Activated CD4-positive, alpha-beta memory T cell treated with anti-CD3 and anti-CD28 coated beads for 36 hours (primary cell): ENCODE measurements at regions of chr11 and their contacts with region 1.

Region 1: GRCh38 chr11:61639816-61640443 is 40.3 kb upstream of the DAGLA start:
- DNase-seq: no peak
- H3K4me3 Mint-ChIP-seq: no peak overlapping the region
- H3K27ac Mint-ChIP-seq: no peak overlapping the region
- H3K4me1 Mint-ChIP-seq: no peaks in the 10 kb centered on the region
- H3K27me3 Mint-ChIP-seq: peaks cover 3% of the 10 kb centered on the region

Region 2: DNA sequence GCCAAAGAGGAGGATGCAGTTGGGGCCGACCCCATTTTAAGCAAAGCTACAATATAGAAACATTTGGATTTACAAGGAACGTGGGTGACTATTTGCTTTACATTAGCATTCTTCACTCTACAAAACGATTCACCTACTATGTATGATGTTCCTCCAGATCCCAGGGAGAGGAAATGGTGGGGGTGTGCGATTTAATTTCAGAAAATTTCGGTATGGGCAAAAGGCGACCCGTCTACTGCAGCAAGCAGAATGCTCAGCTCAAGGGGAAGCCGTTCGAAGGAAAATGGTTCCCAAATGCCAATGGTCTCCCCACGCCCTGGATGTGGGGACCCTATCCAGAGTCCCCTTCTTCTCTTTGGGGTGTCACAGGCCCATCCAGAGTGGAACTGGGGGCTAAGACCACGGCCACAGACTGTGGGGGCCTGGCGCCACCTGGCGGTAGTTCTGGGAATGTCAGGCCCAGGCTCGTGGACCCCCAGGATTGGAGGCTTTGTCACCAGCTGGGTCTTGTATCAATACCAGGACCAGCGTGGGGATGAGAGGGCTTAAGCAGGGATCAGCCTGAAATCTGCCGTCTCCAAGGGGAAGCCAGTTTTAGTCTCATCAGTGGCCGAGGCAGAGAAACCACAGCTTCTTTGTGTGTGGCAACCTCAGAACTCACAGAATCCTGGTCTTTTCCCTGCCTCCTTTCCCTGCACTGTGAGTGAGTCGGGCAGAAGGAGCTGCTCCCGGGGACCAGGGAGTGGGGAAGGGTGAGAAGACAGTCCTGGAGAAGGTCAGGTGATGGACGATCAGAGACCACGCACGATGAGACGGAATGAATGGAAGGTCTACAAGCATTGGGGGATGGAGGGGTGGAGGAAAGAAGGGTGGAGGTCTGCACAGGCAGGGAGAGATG is 123.0 kb before region 1 on chr11:
- CTCF ChIA-PET with region 1: interaction called, 10 read pairs
- POLR2A ChIA-PET with region 1: no interaction called
- intact Hi-C with region 1: no loop called
- DNase-seq: peak; percentile 60
- H3K4me3 Mint-ChIP-seq: peak overlapping the region; percentile 24
- H3K27ac Mint-ChIP-seq: no peak overlapping the region
- H3K4me1 Mint-ChIP-seq: peaks cover 7% of the 10 kb centered on the region
- H3K27me3 Mint-ChIP-seq: peaks cover 18% of the 10 kb centered on the region

Region 3: GRCh38 chr11:61587521-61588453 is 52.1 kb before region 1 on chr11:
- CTCF ChIA-PET with region 1: interaction called, 13 read pairs
- POLR2A ChIA-PET with region 1: no interaction called
- intact Hi-C with region 1: no loop called
- DNase-seq: peak; percentile 73
- H3K4me3 Mint-ChIP-seq: peak overlapping the region; percentile 59
- H3K27ac Mint-ChIP-seq: no peak overlapping the region
- H3K4me1 Mint-ChIP-seq: peaks cover 12% of the 10 kb centered on the region
- H3K27me3 Mint-ChIP-seq: peaks cover 16% of the 10 kb centered on the region

Region 4: GRCh38 chr11:61650781-61651571 is 11.0 kb after region 1 on chr11:
- CTCF ChIA-PET with region 1: interaction called, 17 read pairs
- POLR2A ChIA-PET with region 1: no interaction called
- intact Hi-C with region 1: no loop called
- DNase-seq: no peak
- H3K4me3 Mint-ChIP-seq: no peak overlapping the region
- H3K27ac Mint-ChIP-seq: no peak overlapping the region
- H3K4me1 Mint-ChIP-seq: no peaks in the 10 kb centered on the region
- H3K27me3 Mint-ChIP-seq: peaks cover 16% of the 10 kb centered on the region

Region 5: DNA sequence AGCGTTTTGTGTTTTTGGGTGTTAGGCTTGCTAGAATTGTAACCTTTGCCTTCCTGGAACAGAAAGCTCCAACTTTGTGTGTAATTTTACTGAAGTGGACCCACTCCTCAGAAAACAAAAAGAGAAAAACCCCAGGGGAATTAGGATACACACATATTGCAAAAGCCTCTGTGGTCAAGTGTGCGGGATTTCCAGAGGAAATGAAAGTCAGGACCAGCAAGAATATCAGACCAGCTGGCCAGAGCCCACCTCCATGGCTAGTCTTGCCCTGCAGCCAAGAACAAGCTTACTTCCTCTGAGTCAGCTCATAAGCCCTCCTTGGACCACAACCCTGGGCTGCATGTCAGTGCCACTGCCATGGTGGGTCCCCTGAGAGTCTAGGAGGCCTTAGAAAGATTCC is 364.5 kb after region 1 on chr11:
- CTCF ChIA-PET with region 1: no interaction called
- POLR2A ChIA-PET with region 1: no interaction called
- intact Hi-C with region 1: no loop called
- DNase-seq: no peak
- H3K4me3 Mint-ChIP-seq: no peak overlapping the region
- H3K27ac Mint-ChIP-seq: no peak overlapping the region
- H3K4me1 Mint-ChIP-seq: no peaks in the 10 kb centered on the region
- H3K27me3 Mint-ChIP-seq: no peaks in the 10 kb centered on the region